ENCODE measurements at regions of chr4 and their contacts with region 1.

Region 1: GRCh38 chr4:41160012-41160789 is 54.1 kb downstream of the APBB2 start:
- DNase-seq: no peak
- H3K4me3 ChIP-seq: no peak overlapping the region
- CTCF ChIP-seq: no peak

Region 2: GRCh38 chr4:40933272-40934053 is 226.7 kb before region 1 on chr4:
- CTCF ChIA-PET with region 1: no interaction called
- POLR2A ChIA-PET with region 1: no interaction called
- DNase-seq: no peak
- H3K4me3 ChIP-seq: no peak overlapping the region
- CTCF ChIP-seq: no peak

Region 3: DNA sequence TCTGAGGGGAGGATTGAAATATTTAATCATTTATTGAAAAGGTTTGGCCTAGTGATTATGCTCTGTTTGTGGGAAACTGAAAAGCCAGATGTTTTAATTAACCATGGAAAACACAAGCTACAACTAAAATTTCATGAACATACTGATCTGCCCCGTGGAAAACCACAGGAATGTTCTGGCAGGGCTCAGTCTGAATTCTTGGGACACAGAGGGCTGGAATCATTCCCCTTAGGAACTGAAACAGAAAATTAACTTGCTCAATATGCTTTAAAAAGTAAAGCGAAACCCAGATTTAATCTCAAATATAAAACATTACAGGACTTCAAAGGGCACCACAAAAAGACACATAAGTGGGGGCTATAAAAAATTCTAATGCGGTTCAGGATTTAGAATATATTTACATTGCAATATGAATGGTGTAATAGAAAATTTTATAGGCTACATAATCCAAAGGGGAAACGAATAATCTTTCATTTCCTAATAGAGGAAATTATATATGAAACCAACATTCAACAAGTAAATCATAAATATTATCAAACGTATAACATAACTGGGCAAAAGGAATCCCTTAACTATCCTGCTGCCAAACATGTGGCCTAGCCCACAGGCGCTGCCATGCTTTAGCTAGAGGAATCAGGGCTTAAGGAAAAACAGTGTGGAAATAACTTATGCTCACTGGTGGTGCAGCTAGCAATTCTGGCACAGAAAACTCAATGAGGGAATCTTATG is 16.7 kb before region 1 on chr4:
- CTCF ChIA-PET with region 1: interaction called, 4 read pairs
- POLR2A ChIA-PET with region 1: interaction called, 10 read pairs
- DNase-seq: peak; percentile 85
- H3K4me3 ChIP-seq: peak overlapping the region; percentile 9
- CTCF ChIP-seq: no peak